Right cardiac atrium (tissue), 5 donors: ENCODE measurements at regions of chr3 and their contacts with region 1.

Region 1: DNA sequence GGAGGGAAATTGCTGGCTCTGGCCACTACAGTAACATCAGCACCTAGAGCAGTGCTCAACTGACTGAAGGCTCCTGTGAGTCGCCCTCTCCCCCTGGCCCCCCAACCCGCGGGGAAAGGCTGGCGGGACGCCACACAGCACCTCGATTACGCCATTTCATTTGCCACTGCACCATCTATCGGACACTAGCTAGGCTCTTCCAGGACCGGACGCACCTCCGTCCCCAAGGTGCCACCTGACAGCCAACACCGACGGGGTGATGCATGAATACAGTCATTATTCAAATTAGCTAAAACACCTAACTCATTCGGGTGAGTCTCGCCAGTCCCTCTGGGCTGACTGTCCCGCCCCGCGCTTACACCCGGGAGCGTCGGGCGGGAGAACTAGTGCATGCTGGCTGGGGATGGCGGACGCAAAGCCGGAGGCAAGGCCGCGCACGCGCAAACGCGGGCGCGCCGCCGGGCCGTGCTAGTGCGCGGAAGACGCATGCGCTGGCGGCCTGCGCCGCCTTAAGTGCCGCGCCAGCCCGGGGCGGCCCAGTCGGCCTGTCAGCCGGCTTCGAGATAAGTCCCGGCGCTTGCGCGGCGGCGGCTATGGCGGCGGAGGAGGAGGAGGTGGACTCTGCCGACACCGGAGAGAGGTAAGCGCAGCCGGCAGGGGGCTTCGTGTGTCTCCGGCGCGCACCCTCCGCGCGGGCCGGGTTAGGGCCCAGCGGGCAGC is at the start of gene ABHD5:
- DNase-seq: peak; percentile 93 to 97 (median 97)
- ATAC-seq: peak; percentile 97 to 98
- H3K4me3 ChIP-seq: peak within 1 kb of the TSS; percentile 77
- H3K27ac ChIP-seq: peak within 1 kb of the TSS; percentile 71
- H3K4me1 ChIP-seq: no peaks in the 10 kb centered on the region
- H3K27me3 ChIP-seq: no peaks in the 10 kb centered on the region
- total RNA-seq, gene ABHD5: 18.2 to 23.5 (median 21.2) TPM

Region 2: GRCh38 chr3:43621656-43622432 is 68.7 kb before region 1 on chr3 and contains the start of gene ANO10:
- intact Hi-C with region 1: loop called in 1 of 4 experiments (anchors 5 kb)
- DNase-seq: peak; percentile 99 to 100 (median 99)
- ATAC-seq: peak; percentile 99
- H3K4me3 ChIP-seq: peak within 1 kb of the TSS; percentile 77
- H3K27ac ChIP-seq: peak within 1 kb of the TSS; percentile 88
- H3K4me1 ChIP-seq: peaks cover 4% of the 10 kb centered on the region
- H3K27me3 ChIP-seq: no peaks in the 10 kb centered on the region
- total RNA-seq, gene ANO10: 14.3 to 16.5 (median 15.9) TPM